Vagina (tissue), 2 donors: ENCODE measurements at regions of chr6 and their contacts with region 1.

Region 1: DNA sequence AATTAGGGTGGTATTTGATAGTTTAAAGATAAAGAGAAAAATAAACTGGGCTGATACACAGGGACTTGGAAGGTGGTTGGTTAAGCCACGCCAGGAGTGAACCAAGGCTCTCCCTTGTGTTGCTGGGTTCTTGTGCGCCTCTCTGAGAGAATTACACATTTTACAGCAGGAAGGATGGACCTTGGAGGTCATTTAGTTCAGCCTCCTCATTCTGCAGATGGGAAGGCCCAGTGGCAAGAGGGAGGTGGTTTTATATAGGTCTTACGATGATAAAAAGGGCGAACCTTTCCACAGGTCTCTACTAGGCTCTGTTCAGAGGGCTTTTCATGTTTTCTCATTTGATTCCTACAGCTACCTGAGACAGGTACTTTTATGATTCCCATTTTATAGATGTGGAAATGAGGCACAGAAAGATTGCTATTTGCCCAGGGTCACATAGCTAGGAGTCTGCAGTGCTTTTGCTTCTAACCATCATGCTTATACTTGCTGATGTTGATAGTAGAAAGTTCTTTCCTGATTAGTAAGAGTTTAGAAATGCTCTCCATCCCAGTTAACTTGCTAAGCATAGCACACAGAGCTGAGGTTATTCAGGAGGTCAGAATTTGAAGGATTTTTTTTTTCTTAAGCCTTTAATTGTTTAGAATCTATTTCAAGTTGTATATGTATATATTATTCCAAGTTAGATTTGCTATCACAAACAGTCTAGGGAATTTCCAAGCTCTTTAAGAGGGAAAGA is 12.8 kb downstream of the HIVEP1 start:
- DNase-seq: no peak
- H3K4me3 ChIP-seq: no peak overlapping the region
- H3K27ac ChIP-seq: no peak overlapping the region
- H3K4me1 ChIP-seq: peaks cover 28% of the 10 kb centered on the region
- H3K27me3 ChIP-seq: no peaks in the 10 kb centered on the region
- CTCF ChIP-seq: no peak
- POLR2A ChIP-seq: no peak

Region 2: GRCh38 chr6:12011276-12012076 is 13.4 kb before region 1 on chr6:
- intact Hi-C with region 1: loop called (anchors 1 kb)
- DNase-seq: peak in 1 of 2 donors; percentile 99
- H3K4me3 ChIP-seq: peak overlapping the region; percentile 80 to 89
- H3K27ac ChIP-seq: peak overlapping the region; percentile 96
- H3K4me1 ChIP-seq: peaks cover 48% of the 10 kb centered on the region
- H3K27me3 ChIP-seq: no peaks in the 10 kb centered on the region
- CTCF ChIP-seq: no peak
- POLR2A ChIP-seq: peak in 1 of 2 donors; percentile 54